Adrenal gland (tissue), 19 donors: ENCODE measurements at regions of chr11 and their contacts with region 1.

Region 1: GRCh38 chr11:12235947-12236743 is 125.8 kb downstream of the MICAL2 start:
- DNase-seq: peak in 2 of 7 donors; percentile 22 to 34
- H3K4me3 ChIP-seq: no peak overlapping the region
- H3K27ac ChIP-seq: peak overlapping the region in 2 of 5 donors; percentile 7 to 68
- H3K4me1 ChIP-seq: peaks cover 0 to 4% of the 10 kb centered on the region in 2 donors
- H3K27me3 ChIP-seq: no peaks in the 10 kb centered on the region
- CTCF ChIP-seq: peak; percentile 59 to 81 (median 74)
- POLR2A ChIP-seq: no peak

Region 2: GRCh38 chr11:11931461-11932055 is 304.6 kb before region 1 on chr11:
- intact Hi-C with region 1: loop called in 1 of 2 experiments (anchors 10 kb)
- DNase-seq: peak; percentile 20 to 53 (median 30)
- H3K4me3 ChIP-seq: no peak overlapping the region
- H3K27ac ChIP-seq: no peak overlapping the region
- H3K4me1 ChIP-seq: peaks cover 6 to 9% of the 10 kb centered on the region in 2 donors
- H3K27me3 ChIP-seq: no peaks in the 10 kb centered on the region
- CTCF ChIP-seq: peak; percentile 28 to 80 (median 72)
- POLR2A ChIP-seq: no peak

Region 3: GRCh38 chr11:12274558-12275197 is 38.5 kb after region 1 on chr11:
- intact Hi-C with region 1: loop called in 1 of 2 experiments (anchors 5 kb)
- DNase-seq: peak in 1 of 7 donors; percentile 8
- H3K4me3 ChIP-seq: no peak overlapping the region
- H3K27ac ChIP-seq: no peak overlapping the region
- H3K4me1 ChIP-seq: no peaks in the 10 kb centered on the region
- H3K27me3 ChIP-seq: no peaks in the 10 kb centered on the region
- CTCF ChIP-seq: no peak
- POLR2A ChIP-seq: no peak

Region 4: DNA sequence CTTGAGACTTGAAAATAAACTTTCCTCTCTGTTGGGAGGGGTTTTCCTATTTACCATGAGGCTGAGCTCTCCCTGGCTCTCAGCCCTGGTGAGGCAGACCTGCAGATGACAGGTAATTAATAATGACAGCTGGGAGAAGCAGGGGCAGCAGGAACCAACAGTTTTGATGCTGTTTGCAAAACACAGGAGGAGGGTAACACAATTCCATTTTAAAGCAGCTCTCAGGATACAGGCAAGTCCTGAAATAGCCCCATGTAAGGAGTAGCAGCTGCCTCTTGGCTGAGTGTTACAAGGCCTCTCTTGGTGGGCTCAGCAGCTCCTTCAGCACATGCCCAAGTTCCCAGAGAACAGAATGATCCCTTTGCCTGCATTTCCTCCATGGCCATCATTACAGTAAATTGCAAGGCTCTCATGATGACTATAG is 154.6 kb after region 1 on chr11:
- intact Hi-C with region 1: no loop called
- DNase-seq: peak in 1 of 7 donors; percentile 16
- H3K4me3 ChIP-seq: no peak overlapping the region
- H3K27ac ChIP-seq: no peak overlapping the region
- H3K4me1 ChIP-seq: peaks cover 0 to 28% of the 10 kb centered on the region in 2 donors
- H3K27me3 ChIP-seq: no peaks in the 10 kb centered on the region
- CTCF ChIP-seq: no peak
- POLR2A ChIP-seq: no peak